ENCODE measurements at regions of chr1 and their contacts with region 1.

Region 1: GRCh38 chr1:226687426-226687825 is 51.7 kb downstream of the ITPKB start:
- DNase-seq: peak; percentile 51
- ATAC-seq: peak; percentile 35
- H3K4me3 Mint-ChIP-seq: no peak overlapping the region
- H3K27ac Mint-ChIP-seq: peak overlapping the region; percentile 50
- H3K4me1 Mint-ChIP-seq: peaks cover 94% of the 10 kb centered on the region
- H3K27me3 Mint-ChIP-seq: no peaks in the 10 kb centered on the region

Region 2: GRCh38 chr1:226634166-226634588 is 53.2 kb before region 1 on chr1:
- CTCF ChIA-PET with region 1: interaction called, 72 read pairs
- POLR2A ChIA-PET with region 1: interaction called, 4 read pairs
- DNase-seq: peak; percentile 84
- ATAC-seq: peak; percentile 78
- H3K4me3 Mint-ChIP-seq: no peak overlapping the region
- H3K27ac Mint-ChIP-seq: peak overlapping the region; percentile 65
- H3K4me1 Mint-ChIP-seq: peaks cover 44% of the 10 kb centered on the region
- H3K27me3 Mint-ChIP-seq: no peaks in the 10 kb centered on the region

Region 3: DNA sequence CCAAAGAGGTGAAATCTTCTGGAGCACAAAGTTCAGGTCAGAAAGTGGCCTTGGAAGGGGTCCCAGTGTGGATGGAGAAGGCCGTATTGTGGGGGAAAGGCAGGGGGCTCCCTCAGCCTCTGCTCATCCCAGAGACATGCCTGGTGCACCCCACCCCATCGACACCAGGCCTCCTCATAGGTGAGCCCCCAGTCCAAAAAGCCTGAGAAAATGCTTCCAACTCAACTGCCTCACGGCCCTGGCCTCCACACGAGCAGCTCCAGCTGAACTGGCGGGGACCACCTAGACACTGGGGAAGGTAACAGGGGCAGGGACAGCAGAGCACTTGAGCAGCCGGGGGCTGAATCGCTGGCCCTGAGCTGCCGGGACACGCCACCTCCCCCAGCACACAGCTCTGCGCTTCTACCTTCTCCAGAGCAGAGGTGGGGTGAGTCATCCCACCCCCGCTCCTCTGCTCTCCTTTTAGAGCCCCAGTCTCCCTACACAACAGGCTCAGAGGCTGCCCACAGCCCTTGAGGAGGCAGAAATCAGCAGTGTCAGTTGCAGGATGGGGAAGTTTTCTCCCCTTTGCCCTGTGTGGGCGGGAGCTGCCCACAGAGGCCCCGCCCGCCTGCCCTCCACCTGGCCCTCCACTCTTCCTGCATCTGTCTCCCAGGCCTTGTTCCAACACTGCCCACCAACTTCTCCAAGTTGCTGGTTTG is 44.4 kb before region 1 on chr1:
- CTCF ChIA-PET with region 1: interaction called, 23 read pairs
- POLR2A ChIA-PET with region 1: no interaction called
- DNase-seq: peak; percentile 58
- ATAC-seq: peak; percentile 73
- H3K4me3 Mint-ChIP-seq: peak overlapping the region; percentile 54
- H3K27ac Mint-ChIP-seq: peak overlapping the region; percentile 91
- H3K4me1 Mint-ChIP-seq: peaks cover 47% of the 10 kb centered on the region
- H3K27me3 Mint-ChIP-seq: no peaks in the 10 kb centered on the region

Region 4: DNA sequence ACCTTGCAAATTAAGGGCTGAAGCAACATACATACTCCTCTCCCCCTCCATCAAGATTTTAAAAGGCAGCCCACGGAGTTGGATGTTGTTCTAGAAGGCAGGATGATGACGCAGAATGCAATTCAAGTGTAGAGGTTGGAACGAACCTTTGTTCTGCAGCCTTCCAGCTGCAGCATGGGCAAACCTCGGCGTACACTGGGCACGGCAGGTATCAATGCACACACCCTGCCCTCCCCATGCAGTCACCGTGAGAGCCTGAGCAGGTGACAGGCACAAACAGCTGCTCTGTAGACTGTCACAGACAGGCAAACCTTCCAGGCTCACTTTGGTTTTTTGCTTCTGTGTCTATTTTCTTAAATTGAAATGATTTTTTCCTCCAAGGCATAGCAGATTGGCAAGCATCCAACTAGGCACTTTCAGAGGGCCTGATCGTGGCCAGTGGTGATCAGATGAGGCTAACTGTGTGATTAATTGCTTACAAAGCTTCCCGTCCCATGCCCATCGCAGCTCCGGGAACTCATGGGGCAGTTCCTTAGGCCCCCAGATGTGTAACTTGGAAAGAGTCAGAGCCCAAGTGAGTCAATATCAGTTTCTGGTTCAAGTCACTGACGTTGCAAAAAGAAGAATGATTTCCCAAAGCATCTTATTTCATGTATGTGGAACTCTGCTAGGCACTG is 30.7 kb before region 1 on chr1:
- CTCF ChIA-PET with region 1: interaction called, 38 read pairs
- POLR2A ChIA-PET with region 1: no interaction called
- DNase-seq: no peak
- ATAC-seq: no peak
- H3K4me3 Mint-ChIP-seq: no peak overlapping the region
- H3K27ac Mint-ChIP-seq: peak overlapping the region; percentile 97
- H3K4me1 Mint-ChIP-seq: peaks cover 28% of the 10 kb centered on the region
- H3K27me3 Mint-ChIP-seq: no peaks in the 10 kb centered on the region

Region 5: GRCh38 chr1:226662642-226663326 is 24.6 kb before region 1 on chr1:
- CTCF ChIA-PET with region 1: interaction called, 38 read pairs
- POLR2A ChIA-PET with region 1: no interaction called
- DNase-seq: peak; percentile 89
- ATAC-seq: peak; percentile 87
- H3K4me3 Mint-ChIP-seq: peak overlapping the region; percentile 54
- H3K27ac Mint-ChIP-seq: peak overlapping the region; percentile 92
- H3K4me1 Mint-ChIP-seq: peaks cover 89% of the 10 kb centered on the region
- H3K27me3 Mint-ChIP-seq: no peaks in the 10 kb centered on the region

Measured in activated CD8-positive, alpha-beta T cell treated with anti-CD3 and anti-CD28 coated beads, Interleukin-2, amount 10 ng/mL, durations not matched to agents 7 days and 5 days (primary cell).